ENCODE measurements at regions of chr2 and their contacts with region 1.

Region 1: DNA sequence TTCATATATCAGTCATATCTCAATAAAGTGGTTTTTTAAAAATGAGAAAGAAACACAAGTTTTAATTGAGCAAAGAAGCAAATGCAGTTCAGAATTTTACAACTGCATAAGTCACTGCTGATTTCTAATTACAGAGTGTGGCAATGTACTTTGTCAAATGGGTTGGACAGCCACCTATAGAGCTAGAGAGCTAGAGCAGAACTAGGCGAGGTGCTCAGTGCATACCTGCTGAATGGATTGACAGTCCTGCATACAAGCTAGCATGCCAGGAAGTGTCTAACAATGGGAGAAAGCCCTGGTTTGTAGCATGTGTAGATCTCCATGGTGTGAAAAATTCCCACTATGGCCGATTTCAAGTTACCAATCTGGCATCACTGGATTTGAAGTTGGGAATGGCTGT is 106.3 kb upstream of the CDCA7 start:
- DNase-seq: no peak
- ATAC-seq: no peak
- H3K4me3 ChIP-seq: no peak overlapping the region
- H3K27ac ChIP-seq: no peak overlapping the region
- H3K4me1 ChIP-seq: no peaks in the 10 kb centered on the region
- H3K27me3 ChIP-seq: no peaks in the 10 kb centered on the region
- CTCF ChIP-seq: no peak

Region 2: DNA sequence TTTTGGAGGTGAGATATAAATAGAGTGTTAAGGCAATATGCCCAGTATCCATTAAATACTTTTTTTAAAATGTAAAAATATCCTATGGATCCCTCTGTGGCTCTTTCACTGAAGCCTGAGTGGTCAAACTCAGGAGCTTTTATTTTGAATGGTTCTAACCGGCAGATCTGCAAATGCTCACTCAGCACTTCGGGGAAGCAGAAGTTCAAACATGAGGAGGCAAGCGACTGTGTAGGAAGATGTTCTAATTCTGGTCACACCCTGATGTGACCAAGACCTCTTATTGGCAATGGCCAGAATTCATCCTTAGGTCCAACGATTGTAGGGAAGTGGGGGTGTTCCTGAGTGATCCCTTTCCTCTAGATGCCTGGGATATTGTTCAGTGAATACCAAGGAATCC is 275.1 kb after region 1 on chr2:
- CTCF ChIA-PET with region 1: no interaction called
- POLR2A ChIA-PET with region 1: no interaction called
- intact Hi-C with region 1: no loop called
- DNase-seq: no peak
- ATAC-seq: no peak
- H3K4me3 ChIP-seq: no peak overlapping the region
- H3K27ac ChIP-seq: no peak overlapping the region
- H3K4me1 ChIP-seq: peaks cover 23% of the 10 kb centered on the region
- H3K27me3 ChIP-seq: no peaks in the 10 kb centered on the region
- CTCF ChIP-seq: no peak

Region 3: DNA sequence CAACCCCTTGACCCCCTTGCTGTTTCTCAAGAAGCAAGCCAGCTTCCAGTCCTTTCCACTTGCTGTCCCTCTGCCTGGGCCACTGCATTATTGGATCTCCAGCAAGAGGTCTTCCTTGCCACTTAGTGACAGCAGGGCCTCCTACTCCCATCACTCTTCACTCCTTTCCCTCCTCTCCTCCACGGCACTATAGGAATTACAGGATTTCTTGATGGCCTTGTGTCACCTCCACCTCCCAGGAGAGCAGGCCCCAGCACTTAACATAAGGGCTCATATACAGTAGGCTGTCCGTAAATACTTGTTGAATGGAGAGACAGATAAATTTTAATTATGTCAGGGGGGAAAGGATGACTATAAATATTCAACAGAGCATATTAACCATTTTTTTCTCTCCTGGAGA is 587.3 kb after region 1 on chr2:
- CTCF ChIA-PET with region 1: no interaction called
- POLR2A ChIA-PET with region 1: interaction called, 10 read pairs
- intact Hi-C with region 1: no loop called
- DNase-seq: no peak
- ATAC-seq: no peak
- H3K4me3 ChIP-seq: no peak overlapping the region
- H3K27ac ChIP-seq: no peak overlapping the region
- H3K4me1 ChIP-seq: no peaks in the 10 kb centered on the region
- H3K27me3 ChIP-seq: no peaks in the 10 kb centered on the region
- CTCF ChIP-seq: no peak

Region 4: GRCh38 chr2:173982918-173983317 is 734.5 kb after region 1 on chr2:
- CTCF ChIA-PET with region 1: no interaction called
- POLR2A ChIA-PET with region 1: no interaction called
- intact Hi-C with region 1: no loop called
- DNase-seq: no peak
- ATAC-seq: no peak
- H3K4me3 ChIP-seq: no peak overlapping the region
- H3K27ac ChIP-seq: no peak overlapping the region
- H3K4me1 ChIP-seq: peaks cover 16% of the 10 kb centered on the region
- H3K27me3 ChIP-seq: no peaks in the 10 kb centered on the region
- CTCF ChIP-seq: no peak

Measured in PC-3 (cell line).